Mammary epithelial cell (primary cell): ENCODE measurements at regions of chr12 and their contacts with region 1.

Region 1: GRCh38 chr12:125503128-125503527 is 437.9 kb downstream of the AACS start:
- DNase-seq: no peak
- H3K4me3 ChIP-seq: no peak overlapping the region
- H3K27ac ChIP-seq: no peak overlapping the region
- H3K4me1 ChIP-seq: no peaks in the 10 kb centered on the region
- H3K27me3 ChIP-seq: no peaks in the 10 kb centered on the region
- CTCF ChIP-seq: no peak

Region 2: GRCh38 chr12:125492354-125493270 is 10.5 kb before region 1 on chr12:
- CTCF ChIA-PET with region 1: no interaction called
- dilution Hi-C with region 1: no loop called
- in situ Hi-C with region 1: no loop called
- intact Hi-C with region 1: no loop called
- DNase-seq: no peak
- H3K4me3 ChIP-seq: no peak overlapping the region
- H3K27ac ChIP-seq: no peak overlapping the region
- H3K4me1 ChIP-seq: no peaks in the 10 kb centered on the region
- H3K27me3 ChIP-seq: no peaks in the 10 kb centered on the region
- CTCF ChIP-seq: no peak

Region 3: DNA sequence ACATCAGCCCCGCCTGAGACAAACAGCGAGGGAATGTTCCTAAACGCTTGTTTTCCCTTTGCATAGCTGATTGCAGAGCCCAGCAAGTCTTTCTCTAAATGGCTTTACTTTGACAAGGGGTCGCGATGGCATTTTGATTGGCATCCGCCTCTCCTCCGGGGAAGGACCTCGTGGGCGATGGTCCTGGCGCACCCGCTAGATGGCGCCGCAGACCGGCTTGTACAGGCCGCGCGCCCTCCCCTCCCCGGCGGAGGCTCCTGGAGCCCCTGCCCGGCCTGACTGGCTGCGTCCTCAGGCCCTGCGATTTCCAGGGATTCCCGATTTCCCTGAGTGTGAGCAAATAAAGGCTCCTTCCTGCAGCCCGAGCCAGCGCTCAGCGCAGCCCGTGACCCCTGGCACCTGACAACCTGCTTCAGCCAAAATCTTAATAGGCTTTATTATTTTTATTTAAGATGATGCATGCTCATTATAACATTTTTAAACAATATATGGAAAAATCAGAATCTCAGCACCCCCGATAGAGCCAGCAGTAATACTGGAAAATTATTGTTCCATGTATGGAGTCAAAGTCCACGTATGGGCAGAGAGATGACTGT is 30.4 kb after region 1 on chr12:
- CTCF ChIA-PET with region 1: no interaction called
- dilution Hi-C with region 1: no loop called
- in situ Hi-C with region 1: no loop called
- intact Hi-C with region 1: loop called (anchors 2 kb)
- DNase-seq: no peak
- H3K4me3 ChIP-seq: no peak overlapping the region
- H3K27ac ChIP-seq: no peak overlapping the region
- H3K4me1 ChIP-seq: no peaks in the 10 kb centered on the region
- H3K27me3 ChIP-seq: no peaks in the 10 kb centered on the region
- CTCF ChIP-seq: peak in 1 of 2 donors; percentile 40